H1 (cell line): ENCODE measurements at regions of chr3 and their contacts with region 1.

Region 1: DNA sequence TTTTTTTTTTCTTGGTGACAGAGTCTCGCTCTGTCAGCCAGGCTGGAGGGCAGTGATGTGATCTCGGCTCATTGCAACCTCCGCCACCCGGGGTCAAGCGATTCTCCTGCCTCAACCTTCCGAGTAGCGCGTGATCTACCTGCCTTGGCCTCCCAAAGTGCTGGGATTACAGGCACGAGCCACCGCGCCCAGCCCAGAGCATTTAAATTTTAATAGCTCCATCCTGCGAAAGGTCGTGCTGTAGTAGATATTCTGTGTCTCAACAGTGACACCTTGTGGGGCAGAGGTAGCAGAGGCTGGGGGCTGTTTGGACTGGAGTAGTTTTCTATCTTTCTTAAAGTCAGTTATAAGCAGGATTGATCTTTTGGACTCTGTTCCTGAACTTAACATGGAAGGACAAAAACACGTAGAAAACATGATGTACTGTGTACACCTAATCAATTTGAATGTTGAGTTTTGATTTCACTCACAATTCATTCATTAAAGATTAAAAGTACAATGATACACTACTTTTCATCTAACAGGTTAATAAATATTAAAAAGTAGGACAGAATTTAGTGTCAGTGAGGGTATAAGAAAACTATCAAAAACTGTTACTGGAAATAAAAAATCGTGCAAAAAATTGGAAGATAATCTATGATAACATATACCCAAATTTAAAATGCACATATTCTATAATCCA is 11.0 kb upstream of the PDCD6IP start:
- DNase-seq: peak in 1 of 2 experiments; percentile 72
- H3K4me3 ChIP-seq: 0 out of 8 replicates have a peak overlapping the region, but pooled peaks of 1 of the 4 experiments have one; percentile 3
- H3K27ac ChIP-seq: no peak overlapping the region
- H3K4me1 ChIP-seq: peaks cover 1 to 12% (median 6%) of the 10 kb centered on the region in 4 experiments; a peak in 6 of 7 replicates
- H3K27me3 ChIP-seq: no peaks in the 10 kb centered on the region
- CTCF ChIP-seq: peak; percentile 64 to 85 (median 74); a peak in 3 of 4 replicates
- EP300 ChIP-seq: no peak
- POLR2A ChIP-seq: no peak
- RAD21 ChIP-seq: peak; percentile 86 to 88

Region 2: DNA sequence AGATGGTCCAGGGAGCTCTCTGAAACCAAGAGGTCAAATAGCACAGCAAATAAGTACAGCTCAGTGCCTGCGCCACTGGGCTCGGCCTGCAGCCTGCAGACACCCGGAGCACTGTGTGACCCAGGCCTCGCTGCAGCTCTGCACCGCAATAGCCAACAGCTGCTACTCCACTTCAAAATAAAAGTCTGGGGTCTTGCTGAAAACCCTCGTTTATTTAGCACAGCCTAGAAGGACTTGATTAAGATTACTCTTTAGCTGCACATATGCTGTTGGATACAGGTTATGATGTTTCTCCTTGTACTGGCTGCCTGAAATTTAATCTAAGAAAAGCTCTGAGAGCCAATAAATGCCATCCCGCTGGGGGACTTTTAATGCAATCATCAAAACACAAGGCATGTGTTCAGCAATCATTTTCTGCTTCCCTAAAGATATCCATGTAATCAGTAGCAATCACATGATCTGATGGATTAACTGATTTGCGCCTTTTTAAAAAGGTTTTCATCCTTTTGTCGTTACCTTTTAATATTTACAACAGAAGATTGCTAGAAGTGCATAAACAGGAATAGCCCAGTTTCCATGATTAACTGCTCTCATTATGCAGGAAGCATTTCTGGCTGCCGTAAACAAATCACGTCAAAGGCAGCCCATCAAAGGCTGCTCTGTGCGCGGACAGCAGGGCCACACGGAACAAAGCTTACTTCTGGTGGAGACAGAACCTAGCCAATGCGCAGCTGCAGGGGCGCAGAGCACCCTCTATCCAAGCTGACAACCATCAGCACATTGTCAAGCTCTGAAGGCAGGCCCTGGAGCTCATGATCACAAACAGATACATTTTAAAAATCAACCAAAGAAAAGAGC is 128.2 kb before region 1 on chr3:
- CTCF ChIA-PET with region 1: interaction called, 12 read pairs
- POLR2A ChIA-PET with region 1: no interaction called
- DNase-seq: peak in 1 of 2 experiments; percentile 19
- H3K4me3 ChIP-seq: peak overlapping the region; percentile 16 to 51 (median 26); a peak in 6 of 8 replicates
- H3K27ac ChIP-seq: 0 out of 2 replicates have a peak overlapping the region, but pooled peaks have one; percentile 8
- H3K4me1 ChIP-seq: peaks cover 0 to 8% (median 2%) of the 10 kb centered on the region in 4 experiments; a peak in 4 of 7 replicates
- H3K27me3 ChIP-seq: no peaks in the 10 kb centered on the region
- CTCF ChIP-seq: no peak; a peak in 1 of 4 replicates
- EP300 ChIP-seq: no peak
- POLR2A ChIP-seq: no peak
- RAD21 ChIP-seq: 0 out of 4 replicates have a peak, but pooled peaks of 1 of the 2 experiments have one; percentile 6

Region 3: DNA sequence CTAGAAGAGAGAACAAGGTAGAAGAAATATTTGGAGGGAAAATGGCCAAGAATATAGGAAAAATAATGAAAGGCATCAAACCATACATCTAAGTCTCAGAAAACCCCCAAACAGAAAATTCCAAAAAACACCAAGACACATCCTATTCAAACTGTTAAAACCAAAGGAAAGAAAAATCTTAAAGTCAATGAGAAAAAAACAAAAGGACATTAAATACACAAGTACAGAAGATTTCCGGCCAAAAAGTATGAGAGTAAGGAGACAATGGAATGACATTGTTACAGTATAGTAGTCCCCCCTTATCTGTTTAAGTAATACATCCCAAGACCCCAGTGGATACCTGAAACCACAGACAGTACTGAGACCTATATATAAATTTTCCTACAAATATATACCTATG is 88.2 kb before region 1 on chr3:
- CTCF ChIA-PET with region 1: no interaction called
- POLR2A ChIA-PET with region 1: no interaction called
- DNase-seq: no peak
- H3K4me3 ChIP-seq: no peak overlapping the region
- H3K27ac ChIP-seq: no peak overlapping the region
- H3K4me1 ChIP-seq: no peaks in the 10 kb centered on the region
- H3K27me3 ChIP-seq: no peaks in the 10 kb centered on the region
- CTCF ChIP-seq: no peak
- EP300 ChIP-seq: no peak
- POLR2A ChIP-seq: no peak
- RAD21 ChIP-seq: no peak

Region 4: DNA sequence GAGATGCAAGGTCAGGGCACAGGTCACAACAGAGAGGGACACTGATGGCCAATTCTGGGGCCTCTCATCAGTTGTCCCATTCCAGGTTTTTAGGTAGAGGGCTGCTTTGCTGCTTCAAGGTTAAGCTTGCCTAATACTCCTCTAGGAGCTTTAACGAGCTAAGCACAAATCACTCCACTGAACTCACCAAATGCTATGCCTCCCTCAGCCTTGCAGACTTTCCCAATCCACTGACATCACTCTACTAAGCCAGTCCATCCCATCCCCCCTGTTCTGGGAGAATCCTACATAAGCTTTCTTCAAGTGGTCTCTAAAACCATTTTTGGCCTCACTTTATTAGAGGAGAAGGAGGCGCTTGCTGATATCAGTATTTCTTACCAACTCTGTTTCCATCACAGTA is 13.8 kb before region 1 on chr3:
- CTCF ChIA-PET with region 1: interaction called, 43 read pairs
- POLR2A ChIA-PET with region 1: interaction called, 4 read pairs
- DNase-seq: no peak
- H3K4me3 ChIP-seq: no peak overlapping the region
- H3K27ac ChIP-seq: no peak overlapping the region
- H3K4me1 ChIP-seq: no peaks in the 10 kb centered on the region
- H3K27me3 ChIP-seq: no peaks in the 10 kb centered on the region
- CTCF ChIP-seq: no peak
- EP300 ChIP-seq: no peak
- POLR2A ChIP-seq: no peak
- RAD21 ChIP-seq: no peak